Activated CD8-positive, alpha-beta memory T cell treated with anti-CD3 and anti-CD28 coated beads, Interleukin-2, amount 10 ng/mL, durations not matched to agents 7 days and 5 days (primary cell): ENCODE measurements at regions of chr5 and their contacts with region 1.

Region 1: DNA sequence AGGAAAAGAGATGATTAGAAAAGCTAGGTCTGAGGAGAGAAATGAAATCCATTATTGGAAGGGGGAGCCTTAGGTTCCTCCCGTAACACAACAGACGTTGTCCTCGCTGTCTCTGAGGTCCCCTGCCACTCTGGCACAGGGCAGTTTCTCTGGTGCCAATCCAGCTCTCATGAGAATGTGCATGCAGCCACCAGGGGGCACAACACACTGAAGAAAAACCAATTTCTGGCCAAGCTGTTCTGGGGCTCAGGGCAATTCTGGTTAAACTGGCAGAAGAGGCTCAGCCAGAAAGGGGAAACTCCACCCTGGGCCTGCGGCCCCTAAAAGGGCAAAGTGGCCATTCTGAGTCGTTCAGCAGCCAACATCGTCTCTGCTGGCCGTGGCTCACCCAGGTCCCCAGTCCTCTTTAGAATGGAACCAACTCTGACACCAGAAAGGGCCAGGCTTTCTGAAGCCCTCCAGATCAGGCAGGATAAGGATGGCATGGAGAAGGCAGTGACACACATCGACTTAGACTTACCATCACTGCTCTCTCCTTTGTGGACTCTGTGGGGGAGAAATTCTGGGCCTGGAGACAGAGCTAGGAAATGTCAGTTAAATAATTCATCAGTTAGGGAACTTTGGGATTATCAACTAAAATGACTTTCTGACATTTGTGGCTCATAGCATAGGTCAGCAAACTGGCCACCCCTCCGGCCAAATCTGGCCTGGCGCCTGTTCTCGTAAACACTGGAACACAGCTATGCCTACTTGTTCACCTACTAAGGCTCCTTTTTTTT is 58.5 kb upstream of the GOLPH3 start:
- DNase-seq: peak; percentile 83
- ATAC-seq: peak; percentile 90
- H3K4me3 Mint-ChIP-seq: no peak overlapping the region
- H3K27ac Mint-ChIP-seq: peak overlapping the region; percentile 53
- H3K4me1 Mint-ChIP-seq: peaks cover 3% of the 10 kb centered on the region
- H3K27me3 Mint-ChIP-seq: no peaks in the 10 kb centered on the region

Region 2: DNA sequence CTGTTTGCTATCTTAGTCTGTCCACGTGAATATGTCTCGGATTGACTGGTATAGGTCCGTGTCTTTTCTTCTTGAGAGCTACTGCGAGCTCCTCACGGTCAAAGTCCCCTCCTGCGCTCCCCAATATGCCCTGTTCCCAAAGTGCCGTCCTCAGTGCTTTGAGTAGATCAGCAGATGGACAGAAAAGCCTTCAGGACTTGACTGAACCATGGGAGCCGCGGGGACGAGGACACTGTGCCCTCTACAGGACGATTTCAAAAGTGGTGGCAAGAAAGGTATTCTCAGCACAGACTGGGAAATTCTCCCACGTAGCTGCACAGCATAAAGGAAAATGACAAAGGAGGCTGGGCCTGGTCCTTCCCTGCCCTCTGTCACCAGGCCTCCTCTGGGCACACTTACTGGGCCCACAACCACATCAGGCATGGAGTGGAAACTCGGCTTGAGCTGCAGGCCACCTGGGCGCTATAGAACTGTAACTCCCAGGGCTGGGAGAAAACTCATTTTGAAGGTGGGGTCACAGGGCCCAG is 96.7 kb after region 1 on chr5:
- CTCF ChIA-PET with region 1: interaction called, 139 read pairs
- DNase-seq: peak; percentile 70
- ATAC-seq: peak; percentile 94
- H3K4me3 Mint-ChIP-seq: no peak overlapping the region
- H3K27ac Mint-ChIP-seq: no peak overlapping the region
- H3K4me1 Mint-ChIP-seq: peaks cover 2% of the 10 kb centered on the region
- H3K27me3 Mint-ChIP-seq: no peaks in the 10 kb centered on the region

Region 3: GRCh38 chr5:32613050-32613672 is 380.5 kb after region 1 on chr5:
- CTCF ChIA-PET with region 1: interaction called, 12 read pairs
- DNase-seq: peak; percentile 88
- ATAC-seq: peak; percentile 83
- H3K4me3 Mint-ChIP-seq: no peak overlapping the region
- H3K27ac Mint-ChIP-seq: no peak overlapping the region
- H3K4me1 Mint-ChIP-seq: peaks cover 12% of the 10 kb centered on the region
- H3K27me3 Mint-ChIP-seq: no peaks in the 10 kb centered on the region